ENCODE measurements at regions of chr19 and their contacts with region 1.

Region 1: GRCh38 chr19:14136509-14137281 is at the start of gene ASF1B:
- DNase-seq: peak; percentile 95 to 99
- ATAC-seq: peak; percentile 78 to 91 (median 82)
- H3K4me3 ChIP-seq: peak within 1 kb of the TSS; percentile 86
- H3K4me3 Mint-ChIP-seq: peak within 1 kb of the TSS; percentile 90
- H3K27ac ChIP-seq: peak within 1 kb of the TSS; percentile 95
- H3K27ac Mint-ChIP-seq: peak within 1 kb of the TSS; percentile 88 to 90
- H3K4me1 ChIP-seq: peaks cover 25% of the 10 kb centered on the region
- H3K4me1 Mint-ChIP-seq: peaks cover 27 to 37% of the 10 kb centered on the region in 2 donors
- H3K27me3 ChIP-seq: no peaks in the 10 kb centered on the region
- H3K27me3 Mint-ChIP-seq: no peaks in the 10 kb centered on the region
- CTCF ChIP-seq: peak; percentile 73
- total RNA-seq, gene ASF1B: 4.5 to 5.5 (median 4.8) TPM

Region 2: GRCh38 chr19:13938301-13939064 is 198.2 kb before region 1 on chr19 and contains the start of gene PODNL1:
- intact Hi-C with region 1: no loop called
- DNase-seq: no peak
- ATAC-seq: peak in 2 of 3 donors; percentile 24 to 73
- H3K4me3 ChIP-seq: no peak within 1 kb of the TSS
- H3K4me3 Mint-ChIP-seq: no peak within 1 kb of the TSS
- H3K27ac ChIP-seq: no peak within 1 kb of the TSS
- H3K27ac Mint-ChIP-seq: no peak within 1 kb of the TSS
- H3K4me1 ChIP-seq: peaks cover 11% of the 10 kb centered on the region
- H3K4me1 Mint-ChIP-seq: peaks cover 0 to 6% of the 10 kb centered on the region in 2 donors
- H3K27me3 ChIP-seq: peaks cover 9% of the 10 kb centered on the region
- H3K27me3 Mint-ChIP-seq: peaks cover 0 to 13% of the 10 kb centered on the region in 2 donors
- CTCF ChIP-seq: no peak
- total RNA-seq, gene PODNL1: 0.61 TPM in 1 of 3 donors, not detected in the others

Region 3: GRCh38 chr19:14081325-14082093 is 55.2 kb before region 1 on chr19:
- intact Hi-C with region 1: loop called (anchors 2 kb)
- DNase-seq: peak; percentile 99 to 100
- ATAC-seq: peak; percentile 92 to 97 (median 94)
- H3K4me3 ChIP-seq: peak overlapping the region; percentile 49
- H3K4me3 Mint-ChIP-seq: peak overlapping the region; percentile 97
- H3K27ac ChIP-seq: peak overlapping the region; percentile 78
- H3K27ac Mint-ChIP-seq: peak overlapping the region; percentile 94 to 96
- H3K4me1 ChIP-seq: peaks cover 18% of the 10 kb centered on the region
- H3K4me1 Mint-ChIP-seq: peaks cover 6 to 14% of the 10 kb centered on the region in 2 donors
- H3K27me3 ChIP-seq: no peaks in the 10 kb centered on the region
- H3K27me3 Mint-ChIP-seq: no peaks in the 10 kb centered on the region
- CTCF ChIP-seq: no peak

Region 4: DNA sequence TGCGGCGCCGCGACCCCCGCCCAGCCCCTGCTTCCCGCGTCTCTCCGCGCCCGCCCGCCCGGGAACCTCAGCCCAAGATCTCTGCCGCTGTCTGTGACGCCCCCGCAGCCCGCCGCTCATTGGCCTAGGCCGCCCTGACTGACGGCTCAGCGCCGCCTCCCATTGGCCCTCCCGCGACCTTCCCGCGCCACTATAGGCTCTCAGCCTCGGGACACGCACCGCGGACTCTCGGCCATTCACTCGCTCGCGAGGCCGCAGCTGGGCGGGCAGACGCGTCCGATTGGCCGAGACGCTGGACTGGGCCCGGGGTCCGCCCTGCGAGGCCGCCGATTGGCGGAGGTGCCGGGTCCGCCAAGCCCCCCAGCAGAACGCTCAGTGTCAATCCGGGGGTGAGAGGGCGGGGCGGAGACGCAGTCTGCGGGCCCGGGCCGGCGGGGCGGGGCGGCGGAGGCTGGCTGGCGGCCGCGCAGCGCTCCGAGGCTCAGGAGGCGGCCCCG is 19.0 kb before region 1 on chr19 and contains the start of gene PRKACA:
- intact Hi-C with region 1: loop called (anchors 1 kb)
- DNase-seq: peak; percentile 98 to 99
- ATAC-seq: peak; percentile 85 to 96 (median 88)
- H3K4me3 ChIP-seq: peak within 1 kb of the TSS; percentile 65
- H3K4me3 Mint-ChIP-seq: peak within 1 kb of the TSS; percentile 97
- H3K27ac ChIP-seq: peak within 1 kb of the TSS; percentile 99
- H3K27ac Mint-ChIP-seq: peak within 1 kb of the TSS; percentile 94 to 97
- H3K4me1 ChIP-seq: peaks cover 52% of the 10 kb centered on the region
- H3K4me1 Mint-ChIP-seq: peaks cover 27 to 36% of the 10 kb centered on the region in 2 donors
- H3K27me3 ChIP-seq: no peaks in the 10 kb centered on the region
- H3K27me3 Mint-ChIP-seq: no peaks in the 10 kb centered on the region
- CTCF ChIP-seq: no peak
- total RNA-seq, gene PRKACA: 68.6 to 71.8 (median 69.3) TPM

Region 5: GRCh38 chr19:14405758-14406644 is 269.3 kb after region 1 on chr19:
- intact Hi-C with region 1: loop called (anchors 2 kb)
- DNase-seq: peak; percentile 92 to 94
- ATAC-seq: peak; percentile 64 to 86 (median 71)
- H3K4me3 ChIP-seq: no peak overlapping the region
- H3K4me3 Mint-ChIP-seq: peak overlapping the region; percentile 82
- H3K27ac ChIP-seq: peak overlapping the region; percentile 65
- H3K27ac Mint-ChIP-seq: peak overlapping the region; percentile 92
- H3K4me1 ChIP-seq: peaks cover 59% of the 10 kb centered on the region
- H3K4me1 Mint-ChIP-seq: peaks cover 45 to 71% of the 10 kb centered on the region in 2 donors
- H3K27me3 ChIP-seq: no peaks in the 10 kb centered on the region
- H3K27me3 Mint-ChIP-seq: no peaks in the 10 kb centered on the region
- CTCF ChIP-seq: peak; percentile 98

Region 6: GRCh38 chr19:14479975-14480699 is 343.4 kb after region 1 on chr19:
- intact Hi-C with region 1: loop called (anchors 5 kb)
- DNase-seq: peak; percentile 80 to 81
- ATAC-seq: peak in 2 of 3 donors; percentile 30 to 49
- H3K4me3 ChIP-seq: no peak overlapping the region
- H3K4me3 Mint-ChIP-seq: no peak overlapping the region
- H3K27ac ChIP-seq: no peak overlapping the region
- H3K27ac Mint-ChIP-seq: no peak overlapping the region
- H3K4me1 ChIP-seq: peaks cover 37% of the 10 kb centered on the region
- H3K4me1 Mint-ChIP-seq: peaks cover 12 to 26% of the 10 kb centered on the region in 2 donors
- H3K27me3 ChIP-seq: no peaks in the 10 kb centered on the region
- H3K27me3 Mint-ChIP-seq: no peaks in the 10 kb centered on the region
- CTCF ChIP-seq: peak; percentile 94